ENCODE measurements at regions of chr11 and their contacts with region 1.

Region 1: DNA sequence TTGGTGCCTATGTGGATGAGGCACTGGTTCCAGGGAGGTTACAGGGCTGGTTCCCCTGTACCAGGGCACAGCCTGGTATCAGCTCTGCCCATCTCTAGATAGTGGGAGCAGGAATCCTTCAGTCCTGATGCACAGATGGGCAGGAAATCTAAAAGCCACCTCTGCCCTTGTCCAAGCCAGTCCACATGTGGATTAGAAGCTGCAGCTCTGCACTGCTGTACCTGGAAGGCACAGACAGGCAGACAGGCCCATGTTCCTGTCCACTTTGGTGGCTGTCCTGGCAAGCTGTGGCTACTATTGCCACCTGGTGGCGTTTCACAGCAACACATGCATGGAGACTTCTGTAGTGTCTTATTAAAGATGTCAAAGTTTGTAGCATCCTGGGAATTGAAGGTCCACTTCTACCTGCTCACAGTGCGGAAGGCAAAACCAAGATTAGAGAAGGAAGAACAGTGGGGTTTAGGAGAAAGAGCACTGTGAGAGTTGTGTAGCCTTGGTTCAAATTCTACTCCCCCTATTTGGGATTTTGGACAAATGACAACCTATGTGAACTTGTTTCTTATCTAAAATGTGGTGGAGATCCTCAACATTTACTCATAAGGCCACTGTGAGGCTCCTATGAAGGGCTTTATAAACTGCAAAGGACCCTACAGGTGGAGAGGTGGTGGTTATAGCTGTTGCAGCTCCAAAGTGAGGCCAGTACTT is 30.1 kb downstream of the NAV2 start:
- DNase-seq: peak; percentile 88
- ATAC-seq: peak; percentile 88
- H3K4me3 ChIP-seq: no peak overlapping the region
- H3K27ac ChIP-seq: no peak overlapping the region
- H3K4me1 ChIP-seq: 0 out of 2 replicates have a peak, but pooled peaks cover 10% of the 10 kb centered on the region
- H3K27me3 ChIP-seq: no peaks in the 10 kb centered on the region
- CTCF ChIP-seq: peak; percentile 88

Region 2: DNA sequence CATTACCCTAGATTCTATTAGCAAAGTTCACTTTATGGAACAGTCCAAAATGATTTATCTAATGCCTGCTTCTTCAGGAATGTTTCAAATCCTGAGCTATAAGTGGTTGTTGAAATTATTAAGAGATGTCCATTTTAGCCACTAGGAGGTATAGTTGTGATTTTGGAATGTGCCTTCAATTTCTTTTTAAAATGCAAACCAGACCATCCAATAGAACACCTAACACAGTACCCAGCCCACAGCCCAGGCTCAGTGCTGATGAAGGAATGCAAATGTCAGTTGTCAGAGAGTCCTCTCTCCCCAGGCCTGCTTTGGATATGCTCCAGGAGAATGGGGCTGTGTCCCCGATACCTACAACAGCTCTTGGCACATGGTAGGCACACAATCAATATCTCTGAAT is 416.2 kb before region 1 on chr11:
- CTCF ChIA-PET with region 1: no interaction called
- POLR2A ChIA-PET with region 1: no interaction called
- intact Hi-C with region 1: loop called (anchors 10 kb)
- DNase-seq: peak; percentile 39
- ATAC-seq: peak; percentile 64
- H3K4me3 ChIP-seq: no peak overlapping the region
- H3K27ac ChIP-seq: no peak overlapping the region
- H3K4me1 ChIP-seq: no peaks in the 10 kb centered on the region
- H3K27me3 ChIP-seq: peaks cover 35% of the 10 kb centered on the region
- CTCF ChIP-seq: peak; percentile 64

Region 3: GRCh38 chr11:19561011-19561410 is 181.7 kb before region 1 on chr11:
- CTCF ChIA-PET with region 1: interaction called, 9 read pairs
- POLR2A ChIA-PET with region 1: no interaction called
- intact Hi-C with region 1: loop called (anchors 1 kb)
- DNase-seq: peak; percentile 31
- ATAC-seq: peak; percentile 55
- H3K4me3 ChIP-seq: no peak overlapping the region
- H3K27ac ChIP-seq: no peak overlapping the region
- H3K4me1 ChIP-seq: peaks cover 10% of the 10 kb centered on the region; the same call in 1 of the 2 replicates
- H3K27me3 ChIP-seq: no peaks in the 10 kb centered on the region
- CTCF ChIP-seq: no peak

Region 4: GRCh38 chr11:19679952-19680828 is 62.5 kb before region 1 on chr11:
- CTCF ChIA-PET with region 1: no interaction called
- POLR2A ChIA-PET with region 1: no interaction called
- intact Hi-C with region 1: no loop called
- DNase-seq: peak; percentile 97
- ATAC-seq: peak; percentile 93
- H3K4me3 ChIP-seq: peak overlapping the region; percentile 20; the same call in 1 of the 2 replicates
- H3K27ac ChIP-seq: peak overlapping the region; percentile 66
- H3K4me1 ChIP-seq: peaks cover 29% of the 10 kb centered on the region
- H3K27me3 ChIP-seq: no peaks in the 10 kb centered on the region
- CTCF ChIP-seq: no peak

Region 5: GRCh38 chr11:19712281-19713220 is 30.2 kb before region 1 on chr11 and contains the start of gene NAV2:
- CTCF ChIA-PET with region 1: interaction called, 3 read pairs
- POLR2A ChIA-PET with region 1: no interaction called
- intact Hi-C with region 1: loop called (anchors 2 kb)
- DNase-seq: peak; percentile 91
- ATAC-seq: peak; percentile 79
- H3K4me3 ChIP-seq: peak within 1 kb of the TSS; percentile 90
- H3K27ac ChIP-seq: peak within 1 kb of the TSS; percentile 81
- H3K4me1 ChIP-seq: peaks cover 38% of the 10 kb centered on the region
- H3K27me3 ChIP-seq: no peaks in the 10 kb centered on the region
- CTCF ChIP-seq: no peak
- total RNA-seq, gene NAV2: 10.4 and 14.9 TPM in 2 replicates

Region 6: DNA sequence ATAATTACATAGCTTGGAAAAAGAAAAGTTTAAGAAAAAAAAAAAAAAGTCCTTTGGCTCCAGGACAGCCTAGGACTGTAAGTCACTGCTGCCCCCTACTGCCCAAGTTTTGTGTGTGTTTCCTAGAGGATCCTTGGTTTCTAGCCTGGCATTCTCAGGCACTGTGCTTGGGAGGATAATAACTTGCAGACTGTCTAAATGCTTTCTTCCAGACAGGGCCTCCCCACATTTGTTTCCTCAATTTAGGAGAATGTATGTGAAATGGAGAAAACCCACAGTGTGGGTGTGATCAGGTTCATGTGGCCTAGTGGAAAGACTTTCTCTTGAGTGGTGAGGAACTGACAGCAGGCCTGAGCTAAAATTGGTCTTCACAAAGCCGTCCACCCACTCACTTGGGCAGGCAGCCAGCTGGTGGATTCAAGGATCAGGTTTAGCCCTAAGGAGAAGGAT is 160.9 kb after region 1 on chr11:
- CTCF ChIA-PET with region 1: interaction called, 15 read pairs
- POLR2A ChIA-PET with region 1: no interaction called
- intact Hi-C with region 1: loop called (anchors 1 kb)
- DNase-seq: peak; percentile 78
- ATAC-seq: peak; percentile 86
- H3K4me3 ChIP-seq: no peak overlapping the region
- H3K27ac ChIP-seq: no peak overlapping the region
- H3K4me1 ChIP-seq: no peaks in the 10 kb centered on the region
- H3K27me3 ChIP-seq: no peaks in the 10 kb centered on the region
- CTCF ChIP-seq: peak; percentile 84

Measured in PC-3 (cell line).